ENCODE measurements at regions of chr7 and their contacts with region 1.

Region 1: DNA sequence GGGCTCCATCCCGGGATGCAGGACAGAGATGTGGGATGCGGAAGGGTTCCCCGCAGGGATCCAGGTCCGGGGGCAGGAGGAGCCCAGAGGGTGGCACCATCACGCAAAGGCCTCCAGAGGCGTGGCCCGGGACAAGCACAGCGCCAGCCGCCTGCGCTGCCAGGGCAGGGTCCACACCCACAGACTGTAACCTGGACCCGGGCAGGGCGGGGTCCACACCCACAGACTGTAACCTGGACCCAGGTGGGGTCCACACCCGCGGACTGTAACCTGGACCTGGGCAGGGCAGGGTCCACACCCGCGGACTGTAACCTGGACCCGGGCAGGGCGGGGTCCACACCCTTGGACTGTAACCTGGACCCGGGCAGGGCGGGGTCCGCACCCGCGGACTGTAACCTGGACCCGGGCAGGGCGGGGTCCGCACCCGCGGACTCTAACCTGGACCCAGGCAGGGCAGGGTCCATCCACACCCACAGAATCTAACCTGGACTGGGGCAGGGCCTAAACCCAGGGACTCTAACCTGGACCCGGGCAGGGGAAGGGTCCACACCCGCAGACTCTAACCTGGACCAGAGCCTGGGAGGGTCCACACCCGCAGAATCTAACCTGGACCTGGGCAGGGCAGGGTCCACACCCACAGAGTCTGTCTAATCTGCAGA is 37.5 kb upstream of the SUN1 start:
- DNase-seq: peak; percentile 51
- H3K4me3 ChIP-seq: no peak overlapping the region
- H3K27ac ChIP-seq: peak overlapping the region; percentile 30 to 41 (median 38)
- H3K4me1 ChIP-seq: no peaks in the 10 kb centered on the region
- H3K27me3 ChIP-seq: no peaks in the 10 kb centered on the region
- CTCF ChIP-seq: no peak
- EP300 ChIP-seq: no peak
- POLR2A ChIP-seq: no peak

Region 2: DNA sequence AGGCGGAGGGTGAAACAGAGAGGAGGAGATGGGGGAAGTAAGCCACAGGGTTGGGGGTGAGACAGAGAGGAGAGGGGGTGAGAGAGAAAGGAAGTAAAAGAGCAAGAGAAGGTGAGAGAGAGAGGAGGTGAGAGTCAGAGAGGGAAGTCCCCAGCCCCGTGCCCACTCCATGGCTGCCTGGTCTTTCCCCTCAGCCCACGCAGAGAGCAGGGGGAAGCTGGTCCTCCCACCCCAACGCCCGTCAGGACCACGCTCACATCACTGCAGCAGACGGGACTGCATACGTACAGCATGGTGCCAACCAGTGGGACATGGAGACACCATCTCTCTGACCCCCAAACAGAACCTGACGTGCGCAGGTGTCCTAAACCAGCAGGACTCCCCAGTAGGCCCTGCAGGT is 263.0 kb before region 1 on chr7:
- in situ Hi-C with region 1: no loop called
- intact Hi-C with region 1: no loop called
- DNase-seq: no peak
- H3K4me3 ChIP-seq: no peak overlapping the region
- H3K27ac ChIP-seq: no peak overlapping the region
- H3K4me1 ChIP-seq: peaks cover 0 to 8% (median 3%) of the 10 kb centered on the region in 4 donors
- H3K27me3 ChIP-seq: peaks cover 24% of the 10 kb centered on the region
- CTCF ChIP-seq: no peak
- EP300 ChIP-seq: no peak
- POLR2A ChIP-seq: no peak

Region 3: DNA sequence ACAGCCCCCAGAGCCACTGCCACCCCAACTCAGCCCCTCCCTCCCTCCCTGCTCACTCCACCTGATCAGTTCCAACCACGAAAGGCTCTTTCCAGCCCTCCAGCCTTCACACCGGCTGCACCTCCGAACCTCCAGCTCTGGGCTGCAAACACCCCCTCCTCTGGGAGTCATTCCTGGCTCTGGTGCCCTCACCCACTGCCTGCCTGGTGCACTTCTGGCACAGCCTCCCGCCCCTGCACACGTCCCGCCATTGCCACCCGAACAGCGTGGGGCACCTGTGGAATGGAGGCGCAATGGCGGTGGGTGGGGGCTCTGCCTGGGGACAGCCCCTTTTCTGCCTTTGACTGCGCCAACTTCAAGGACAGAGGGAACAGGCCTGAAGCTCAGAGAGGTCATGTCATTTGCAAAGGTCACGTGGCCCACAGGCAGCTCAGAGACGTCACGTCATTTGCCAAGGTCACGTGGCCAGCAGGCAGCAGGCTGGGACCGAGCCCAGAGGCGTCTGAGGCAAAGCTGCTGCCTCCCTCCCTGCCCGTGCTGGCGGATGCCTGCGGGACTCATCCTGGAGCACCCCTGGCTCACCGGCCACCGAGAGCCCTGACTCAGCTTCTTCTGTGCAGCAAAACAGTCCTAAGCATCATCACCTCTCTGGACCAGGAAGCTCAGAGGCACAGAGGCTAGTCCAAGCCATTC is 144.3 kb before region 1 on chr7:
- in situ Hi-C with region 1: no loop called
- intact Hi-C with region 1: no loop called
- DNase-seq: no peak
- H3K4me3 ChIP-seq: no peak overlapping the region
- H3K27ac ChIP-seq: no peak overlapping the region
- H3K4me1 ChIP-seq: no peaks in the 10 kb centered on the region
- H3K27me3 ChIP-seq: no peaks in the 10 kb centered on the region
- CTCF ChIP-seq: no peak
- EP300 ChIP-seq: no peak
- POLR2A ChIP-seq: no peak

Region 4: GRCh38 chr7:859359-860030 is 64.7 kb after region 1 on chr7:
- in situ Hi-C with region 1: loop called in 2 of 4 experiments (anchors 5 to 10 kb)
- intact Hi-C with region 1: no loop called
- DNase-seq: no peak
- H3K4me3 ChIP-seq: no peak overlapping the region
- H3K27ac ChIP-seq: no peak overlapping the region
- H3K4me1 ChIP-seq: no peaks in the 10 kb centered on the region
- H3K27me3 ChIP-seq: no peaks in the 10 kb centered on the region
- CTCF ChIP-seq: no peak
- EP300 ChIP-seq: no peak
- POLR2A ChIP-seq: no peak

Region 5: DNA sequence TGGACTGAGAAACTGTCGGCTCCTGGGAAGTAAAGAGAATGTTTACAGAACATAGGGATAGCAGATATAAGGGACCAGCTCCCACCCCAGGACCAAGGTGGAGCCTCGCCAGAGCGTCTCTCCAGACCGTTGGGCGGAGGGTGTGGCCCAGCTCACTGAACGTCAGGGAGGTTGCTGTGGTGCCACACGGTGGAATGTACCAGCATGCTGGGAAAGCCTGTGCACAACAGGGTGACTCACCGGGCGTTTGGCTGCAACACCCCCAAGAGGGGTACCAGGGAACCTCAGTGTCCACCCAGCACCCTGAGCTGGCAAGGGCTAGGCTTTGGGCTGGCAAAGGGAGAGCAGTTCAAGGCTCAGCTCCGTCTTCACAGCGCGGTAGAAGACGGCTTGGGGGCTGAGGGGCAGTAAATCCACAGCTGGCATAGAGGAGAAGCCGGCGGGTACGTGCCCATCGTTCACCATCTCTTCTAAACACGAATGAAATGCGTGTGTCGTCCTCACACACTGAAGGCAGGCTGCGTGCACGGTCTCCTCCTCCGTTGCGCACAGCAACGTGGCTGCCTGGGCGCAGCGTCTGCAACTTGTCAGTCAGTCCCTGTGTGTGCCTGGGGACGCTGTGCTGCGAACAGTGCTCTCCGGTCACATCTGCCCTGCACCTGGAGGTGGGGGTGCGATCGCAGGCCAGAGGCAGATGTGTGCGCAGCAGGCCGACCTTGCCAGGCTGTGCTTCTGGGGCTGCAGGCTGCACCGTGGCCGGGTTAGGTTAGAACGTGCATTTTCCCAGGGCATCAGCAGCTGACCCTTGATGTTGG is 73.1 kb after region 1 on chr7:
- in situ Hi-C with region 1: loop called in 3 of 4 experiments (anchors 5 to 10 kb)
- intact Hi-C with region 1: loop called (anchors 5 kb)
- DNase-seq: peak; percentile 88
- H3K4me3 ChIP-seq: no peak overlapping the region
- H3K27ac ChIP-seq: peak overlapping the region; percentile 74 to 91 (median 84)
- H3K4me1 ChIP-seq: peaks cover 13 to 25% (median 16%) of the 10 kb centered on the region in 4 donors
- H3K27me3 ChIP-seq: no peaks in the 10 kb centered on the region
- CTCF ChIP-seq: no peak
- EP300 ChIP-seq: peak; percentile 47
- POLR2A ChIP-seq: no peak

Region 6: GRCh38 chr7:886626-887487 is 92.1 kb after region 1 on chr7:
- in situ Hi-C with region 1: no loop called
- intact Hi-C with region 1: no loop called
- DNase-seq: no peak
- H3K4me3 ChIP-seq: no peak overlapping the region
- H3K27ac ChIP-seq: no peak overlapping the region
- H3K4me1 ChIP-seq: peaks cover 0 to 6% (median 3%) of the 10 kb centered on the region in 4 donors
- H3K27me3 ChIP-seq: no peaks in the 10 kb centered on the region
- CTCF ChIP-seq: no peak
- EP300 ChIP-seq: no peak
- POLR2A ChIP-seq: no peak

Measured in transverse colon (tissue), 4 donors.